Activated CD4-positive, alpha-beta memory T cell treated with anti-CD3 and anti-CD28 coated beads for 36 hours (primary cell): ENCODE measurements at regions of chr15 and their contacts with region 1.

Region 1: DNA sequence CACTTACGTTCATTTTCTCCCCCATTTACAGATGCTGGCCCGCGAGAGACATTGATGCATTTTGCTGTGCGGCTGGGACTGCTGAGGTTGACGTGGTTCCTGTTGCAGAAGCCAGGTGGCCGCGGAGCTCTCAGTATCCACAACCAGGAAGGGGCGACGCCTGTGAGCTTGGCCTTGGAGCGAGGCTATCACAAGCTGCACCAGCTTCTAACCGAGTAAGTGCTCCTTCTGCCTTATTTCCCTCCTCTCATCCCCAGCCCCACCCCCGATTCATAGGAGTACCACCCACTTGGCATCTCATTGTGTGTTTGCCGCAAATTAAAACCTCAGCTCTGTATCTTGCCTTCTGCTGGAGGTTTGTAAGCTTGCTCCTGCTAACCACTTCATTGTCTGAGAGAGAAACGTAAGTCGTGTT is 163.3 kb downstream of the AKAP13 start:
- DNase-seq: peak; percentile 20
- H3K4me3 Mint-ChIP-seq: no peak overlapping the region
- H3K27ac Mint-ChIP-seq: no peak overlapping the region
- H3K4me1 Mint-ChIP-seq: peaks cover 80% of the 10 kb centered on the region
- H3K27me3 Mint-ChIP-seq: no peaks in the 10 kb centered on the region

Region 2: DNA sequence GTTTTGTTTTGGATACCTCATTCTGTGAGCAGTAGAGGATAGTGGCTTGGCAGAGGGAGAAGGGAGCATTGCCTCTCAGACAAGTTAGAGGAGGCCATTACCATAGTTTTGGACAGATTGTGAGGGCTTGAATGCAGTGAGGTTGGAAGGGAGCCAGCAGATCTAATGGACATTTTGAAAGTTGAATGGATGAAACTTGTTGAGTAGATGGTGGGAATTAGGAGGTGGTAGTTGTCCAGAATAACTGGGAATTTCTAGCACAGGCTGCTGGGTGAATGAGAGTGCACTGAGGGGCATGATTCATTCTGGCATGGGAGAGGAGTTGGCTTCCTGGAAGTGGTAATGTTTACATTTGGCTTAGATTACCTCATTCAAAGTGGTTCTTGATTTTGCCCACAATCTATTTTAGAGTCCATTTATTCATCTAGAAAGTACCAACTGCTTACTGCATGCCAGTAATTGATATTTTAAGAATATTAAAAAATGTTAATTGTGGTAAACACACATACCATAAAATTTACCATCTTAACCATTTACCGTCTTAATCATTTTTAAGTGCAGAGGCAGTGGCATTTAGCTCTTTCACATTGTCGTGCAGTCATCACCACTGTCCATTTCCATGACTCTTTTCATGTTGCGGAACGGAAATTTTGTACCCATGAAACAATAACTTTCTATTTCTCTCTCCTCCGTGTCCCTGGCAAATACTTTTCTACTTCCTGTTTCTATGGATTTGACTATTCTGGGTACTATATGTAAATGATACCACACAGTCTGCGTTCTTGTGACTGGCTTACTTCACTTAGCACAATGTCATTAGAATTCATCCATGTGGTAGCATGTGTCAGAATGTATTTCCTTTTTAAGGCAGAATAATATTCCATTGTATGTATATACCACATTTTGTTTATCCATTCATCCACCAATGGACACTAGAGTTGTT is 135.7 kb before region 1 on chr15:
- CTCF ChIA-PET with region 1: no interaction called
- POLR2A ChIA-PET with region 1: interaction called, 3 read pairs
- intact Hi-C with region 1: loop called (anchors 1 kb)
- DNase-seq: peak; percentile 64
- H3K4me3 Mint-ChIP-seq: peak overlapping the region; percentile 53
- H3K27ac Mint-ChIP-seq: peak overlapping the region; percentile 91
- H3K4me1 Mint-ChIP-seq: peaks cover 81% of the 10 kb centered on the region
- H3K27me3 Mint-ChIP-seq: no peaks in the 10 kb centered on the region

Region 3: GRCh38 chr15:85504749-85505676 is 38.7 kb before region 1 on chr15:
- CTCF ChIA-PET with region 1: interaction called, 10 read pairs
- POLR2A ChIA-PET with region 1: no interaction called
- intact Hi-C with region 1: loop called (anchors 2 kb)
- DNase-seq: peak; percentile 38
- H3K4me3 Mint-ChIP-seq: no peak overlapping the region
- H3K27ac Mint-ChIP-seq: no peak overlapping the region
- H3K4me1 Mint-ChIP-seq: peaks cover 68% of the 10 kb centered on the region
- H3K27me3 Mint-ChIP-seq: no peaks in the 10 kb centered on the region

Region 4: DNA sequence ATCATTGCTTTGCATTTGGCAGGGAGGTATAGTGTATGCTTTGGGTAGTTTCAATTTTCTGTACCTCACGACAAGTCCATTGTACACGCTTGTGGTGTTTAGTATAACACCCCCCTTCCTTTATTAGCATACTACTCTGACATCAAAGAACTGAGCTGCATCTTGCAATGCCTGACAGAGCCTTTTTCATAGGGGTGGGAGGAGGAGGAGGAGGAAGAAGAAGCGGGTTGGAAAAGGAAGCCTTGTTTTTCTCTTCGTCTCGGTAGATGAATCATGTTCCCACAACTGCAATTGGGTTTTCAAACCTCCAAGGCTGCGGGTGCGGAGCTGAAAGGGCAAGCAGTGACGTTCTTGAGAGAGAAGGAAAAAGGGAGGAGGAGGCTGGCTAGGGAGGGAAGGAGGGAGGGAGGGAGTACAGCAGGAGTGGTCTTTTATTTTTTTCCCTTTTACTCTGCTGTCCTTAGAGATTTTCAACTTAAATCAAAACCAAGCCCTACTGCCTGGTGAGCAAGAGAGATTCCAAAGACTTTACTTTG is 75.3 kb after region 1 on chr15:
- CTCF ChIA-PET with region 1: interaction called, 4 read pairs
- POLR2A ChIA-PET with region 1: interaction called, 8 read pairs
- intact Hi-C with region 1: loop called (anchors 1 kb)
- DNase-seq: peak; percentile 81
- H3K4me3 Mint-ChIP-seq: no peak overlapping the region
- H3K27ac Mint-ChIP-seq: no peak overlapping the region
- H3K4me1 Mint-ChIP-seq: peaks cover 25% of the 10 kb centered on the region
- H3K27me3 Mint-ChIP-seq: no peaks in the 10 kb centered on the region

Region 5: DNA sequence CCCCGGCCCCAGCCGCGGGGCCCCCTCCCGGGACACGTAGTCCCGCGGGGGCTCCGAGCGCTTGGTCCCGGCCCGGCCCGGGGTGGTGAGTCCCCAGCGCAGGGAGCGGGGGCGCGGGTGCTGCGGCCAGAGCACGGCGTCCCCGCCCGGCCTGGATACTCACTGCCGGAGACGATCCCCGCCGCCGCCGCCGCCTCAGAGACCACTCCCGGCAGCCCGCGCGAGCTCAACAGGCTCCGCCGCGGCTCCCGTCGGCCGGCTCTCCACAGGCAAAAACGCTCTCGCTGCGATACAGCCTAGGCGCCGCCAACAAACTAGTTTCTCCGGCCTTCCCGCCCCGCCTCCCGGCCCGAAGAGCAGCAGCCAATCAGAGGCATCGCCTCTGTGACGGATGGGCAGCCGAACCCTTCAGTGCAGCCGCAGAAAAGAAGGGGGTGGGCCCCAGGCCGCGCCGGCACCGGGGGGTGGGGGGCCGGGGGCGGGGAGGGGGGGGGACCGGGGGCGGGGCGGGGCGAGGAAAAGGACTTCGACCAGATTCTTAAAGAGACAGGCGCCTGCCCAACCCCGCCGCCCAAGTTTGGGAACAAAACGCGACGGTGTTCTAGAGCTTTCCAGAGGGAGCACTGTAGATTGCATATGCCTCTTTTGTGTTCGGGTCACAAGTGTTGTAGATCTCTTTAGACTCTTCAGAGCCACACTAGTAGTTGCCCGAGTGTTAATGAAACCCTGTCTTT is 251.0 kb after region 1 on chr15 and contains the start of gene KLHL25:
- CTCF ChIA-PET with region 1: no interaction called
- POLR2A ChIA-PET with region 1: no interaction called
- intact Hi-C with region 1: loop called (anchors 5 kb)
- DNase-seq: peak; percentile 95
- H3K4me3 Mint-ChIP-seq: peak within 1 kb of the TSS; percentile 90
- H3K27ac Mint-ChIP-seq: peak within 1 kb of the TSS; percentile 74
- H3K4me1 Mint-ChIP-seq: peaks cover 32% of the 10 kb centered on the region
- H3K27me3 Mint-ChIP-seq: no peaks in the 10 kb centered on the region
- total RNA-seq, gene KLHL25: 5.3 to 5.7 TPM